ENCODE measurements at regions of chr1 and their contacts with region 1.

Region 1: DNA sequence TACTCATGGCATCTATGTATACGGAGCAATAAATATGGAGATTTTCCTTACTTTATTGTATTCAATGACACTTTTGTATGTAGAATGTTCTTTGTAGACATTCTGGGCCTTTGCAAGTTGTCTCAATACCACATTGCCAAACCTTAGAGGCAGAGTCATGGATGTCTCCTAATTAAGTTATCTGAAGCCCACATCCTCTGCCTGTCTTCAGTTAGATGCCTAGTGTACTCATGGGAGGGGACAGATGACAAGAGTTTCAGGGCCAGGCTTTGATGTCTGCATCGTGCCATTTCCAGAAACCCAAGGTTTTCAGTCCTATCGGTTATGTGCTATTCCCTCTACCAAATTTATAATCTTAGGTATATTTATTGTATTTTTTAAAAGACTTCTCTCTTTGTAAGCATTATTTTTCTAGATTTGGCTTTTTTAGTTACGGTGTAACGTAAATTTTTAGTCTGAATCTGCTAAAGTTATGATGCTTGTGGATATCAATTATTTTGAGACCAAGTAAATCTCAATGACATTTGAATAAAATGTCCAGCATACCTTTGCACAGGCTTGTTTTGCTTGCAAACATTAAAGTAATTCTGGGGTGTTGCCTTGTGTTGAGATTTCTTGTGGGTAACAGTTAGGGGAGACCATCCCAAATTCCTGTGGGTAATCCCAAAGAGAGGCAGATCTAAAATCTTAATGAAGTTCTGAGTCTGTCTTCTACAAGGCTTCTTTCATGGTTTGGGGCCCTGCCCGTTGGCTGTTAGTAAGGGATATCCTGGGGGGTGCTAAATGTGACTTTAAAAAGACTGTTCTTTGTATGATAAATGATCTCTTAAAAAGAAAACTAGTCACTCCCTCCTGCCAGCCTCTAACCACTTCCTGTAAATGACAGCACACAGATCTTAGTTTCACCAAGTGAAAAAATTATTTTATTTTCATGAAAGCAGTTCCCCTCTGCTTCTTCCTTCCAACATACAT is 8.0 kb upstream of the MACF1 start:
- DNase-seq: no peak
- H3K4me3 ChIP-seq: no peak overlapping the region
- H3K27ac ChIP-seq: peak overlapping the region in 53 of 59 donors; percentile 1 to 95 (median 66)
- H3K27me3 ChIP-seq: no peaks in the 10 kb centered on the region
- CTCF ChIP-seq: no peak

Region 2: GRCh38 chr1:39104158-39105060 is 92.1 kb before region 1 on chr1:
- intact Hi-C with region 1: loop called (anchors 1 to 2 kb)
- DNase-seq: peak in 3 of 10 donors; percentile 9 to 52 (median 45)
- H3K4me3 ChIP-seq: peak overlapping the region; percentile 47 to 95 (median 80)
- H3K27ac ChIP-seq: peak overlapping the region; percentile 62 to 98 (median 94)
- H3K27me3 ChIP-seq: no peaks in the 10 kb centered on the region
- CTCF ChIP-seq: no peak

Region 3: GRCh38 chr1:39258146-39258924 is 61.8 kb after region 1 on chr1:
- intact Hi-C with region 1: loop called (anchors 1 to 2 kb)
- DNase-seq: peak in 8 of 10 donors; percentile 57 to 77 (median 64)
- H3K4me3 ChIP-seq: peak overlapping the region in 1 of 59 donors; percentile 5
- H3K27ac ChIP-seq: peak overlapping the region; percentile 6 to 87 (median 72)
- H3K27me3 ChIP-seq: no peaks in the 10 kb centered on the region
- CTCF ChIP-seq: peak; percentile 56 to 94 (median 85)

Region 4: DNA sequence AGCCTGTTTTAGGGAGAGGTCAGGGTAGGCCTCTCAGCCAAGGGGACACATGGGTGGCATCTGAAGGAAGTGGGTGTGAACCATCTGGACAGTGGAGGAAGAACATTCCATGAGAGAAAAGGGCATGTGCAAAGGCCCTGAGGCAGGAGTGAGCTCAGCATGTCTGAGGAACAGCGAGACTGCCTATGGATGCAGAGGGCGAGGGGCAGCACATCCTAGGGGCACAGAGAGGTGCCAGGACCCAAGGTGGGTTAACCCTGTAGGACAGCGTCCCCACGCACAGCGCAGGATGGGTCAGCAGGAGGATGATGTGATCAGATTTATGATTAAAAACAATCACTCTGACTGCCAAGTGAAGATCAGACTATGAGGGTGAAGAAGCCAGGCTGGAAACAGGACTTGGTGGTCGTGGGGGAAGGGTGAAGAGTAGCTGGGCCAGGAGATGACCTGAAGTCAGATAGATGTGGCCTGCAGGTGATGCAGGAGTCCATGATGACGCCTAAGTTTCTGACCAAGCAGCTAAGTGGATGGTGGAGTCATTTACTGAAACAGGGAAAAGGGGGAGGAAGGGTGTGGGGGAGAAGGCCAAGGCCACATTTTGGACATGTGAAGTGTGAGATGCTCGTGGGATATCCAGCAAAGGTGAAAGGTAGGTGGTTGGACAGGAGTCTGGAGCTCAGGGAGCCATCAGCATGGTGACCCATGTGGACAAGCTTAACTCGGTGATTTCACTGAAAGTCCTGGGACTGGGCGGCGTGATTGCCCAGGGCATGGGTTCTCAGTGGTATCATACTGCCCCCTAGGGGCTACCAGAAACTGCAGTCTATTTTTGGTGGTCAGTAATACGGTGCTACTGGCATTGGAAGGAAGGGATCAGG is 342.3 kb after region 1 on chr1:
- intact Hi-C with region 1: loop called in 1 of 2 experiments (anchors 2 kb)
- DNase-seq: peak; percentile 55 to 82 (median 76)
- H3K4me3 ChIP-seq: no peak overlapping the region
- H3K27ac ChIP-seq: peak overlapping the region in 25 of 59 donors; percentile 1 to 94 (median 87)
- H3K27me3 ChIP-seq: no peaks in the 10 kb centered on the region
- CTCF ChIP-seq: peak; percentile 83 to 99 (median 94)